Naive thymus-derived CD4-positive, alpha-beta T cell (primary cell): ENCODE measurements at regions of chr2 and their contacts with region 1.

Region 1: GRCh38 chr2:96089411-96090195 is 26.8 kb downstream of the ADRA2B start:
- DNase-seq: peak in 1 of 9 donors; percentile 13
- ATAC-seq: no peak
- H3K4me3 ChIP-seq: no peak overlapping the region
- H3K4me3 Mint-ChIP-seq: no peak overlapping the region
- H3K27ac ChIP-seq: no peak overlapping the region
- H3K27ac Mint-ChIP-seq: no peak overlapping the region
- H3K4me1 ChIP-seq: no peaks in the 10 kb centered on the region
- H3K4me1 Mint-ChIP-seq: peaks cover 0 to 4% (median 0%) of the 10 kb centered on the region in 7 donors
- H3K27me3 ChIP-seq: peaks cover 0 to 2% of the 10 kb centered on the region in 2 donors
- H3K27me3 Mint-ChIP-seq: peaks cover 0 to 10% (median 0%) of the 10 kb centered on the region in 5 donors

Region 2: GRCh38 chr2:96116879-96117697 is 27.5 kb after region 1 on chr2:
- CTCF ChIA-PET with region 1: no interaction called
- POLR2A ChIA-PET with region 1: no interaction called
- intact Hi-C with region 1: loop called in 1 of 2 experiments (anchors 5 kb)
- DNase-seq: peak; percentile 36 to 83 (median 70)
- ATAC-seq: peak; percentile 85
- H3K4me3 ChIP-seq: peak overlapping the region; percentile 41
- H3K4me3 Mint-ChIP-seq: peak overlapping the region; percentile 28 to 79 (median 62)
- H3K27ac ChIP-seq: peak overlapping the region; percentile 55
- H3K27ac Mint-ChIP-seq: peak overlapping the region in 1 of 9 donors; percentile 14
- H3K4me1 ChIP-seq: peaks cover 5 to 8% of the 10 kb centered on the region in 2 donors
- H3K4me1 Mint-ChIP-seq: peaks cover 4 to 19% (median 10%) of the 10 kb centered on the region in 7 donors
- H3K27me3 ChIP-seq: no peaks in the 10 kb centered on the region
- H3K27me3 Mint-ChIP-seq: peaks cover 23 to 50% (median 32%) of the 10 kb centered on the region in 5 donors

Region 3: DNA sequence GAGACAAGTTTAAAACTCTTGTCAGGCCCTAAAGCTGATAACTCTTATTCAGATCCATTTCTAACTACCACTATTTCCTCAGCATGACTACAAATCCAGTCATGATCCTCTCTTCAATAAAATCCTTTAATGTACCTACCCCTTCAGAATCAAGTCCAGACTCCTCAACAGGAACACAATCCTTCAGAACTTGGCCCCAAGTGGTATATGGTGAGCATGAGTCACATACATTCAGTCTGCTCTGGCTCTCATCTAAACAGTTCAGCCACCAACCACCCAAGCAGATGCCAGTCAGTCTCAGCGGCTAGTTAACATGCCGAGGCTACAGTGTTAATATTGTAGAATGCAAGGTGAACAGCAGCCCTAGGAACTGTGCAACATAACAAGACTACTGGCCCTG is 640.6 kb after region 1 on chr2:
- CTCF ChIA-PET with region 1: no interaction called
- POLR2A ChIA-PET with region 1: no interaction called
- intact Hi-C with region 1: no loop called
- DNase-seq: no peak
- ATAC-seq: no peak
- H3K4me3 ChIP-seq: no peak overlapping the region
- H3K4me3 Mint-ChIP-seq: no peak overlapping the region
- H3K27ac ChIP-seq: no peak overlapping the region
- H3K27ac Mint-ChIP-seq: no peak overlapping the region
- H3K4me1 ChIP-seq: no peaks in the 10 kb centered on the region
- H3K4me1 Mint-ChIP-seq: peaks cover 0 to 11% (median 4%) of the 10 kb centered on the region in 7 donors
- H3K27me3 ChIP-seq: no peaks in the 10 kb centered on the region
- H3K27me3 Mint-ChIP-seq: no peaks in the 10 kb centered on the region

Region 4: GRCh38 chr2:96895726-96896651 is 806.4 kb after region 1 on chr2:
- CTCF ChIA-PET with region 1: no interaction called
- POLR2A ChIA-PET with region 1: no interaction called
- intact Hi-C with region 1: no loop called
- DNase-seq: no peak
- ATAC-seq: peak; percentile 41
- H3K4me3 ChIP-seq: no peak overlapping the region
- H3K4me3 Mint-ChIP-seq: peak overlapping the region in 7 of 10 donors; percentile 34 to 72 (median 52)
- H3K27ac ChIP-seq: no peak overlapping the region
- H3K27ac Mint-ChIP-seq: peak overlapping the region; percentile 56 to 88 (median 81)
- H3K4me1 ChIP-seq: peaks cover 24 to 47% of the 10 kb centered on the region in 2 donors
- H3K4me1 Mint-ChIP-seq: peaks cover 44 to 75% (median 68%) of the 10 kb centered on the region in 7 donors
- H3K27me3 ChIP-seq: no peaks in the 10 kb centered on the region
- H3K27me3 Mint-ChIP-seq: no peaks in the 10 kb centered on the region